CD4-positive, alpha-beta T cell (primary cell): ENCODE measurements at regions of chr12 and their contacts with region 1.

Region 1: DNA sequence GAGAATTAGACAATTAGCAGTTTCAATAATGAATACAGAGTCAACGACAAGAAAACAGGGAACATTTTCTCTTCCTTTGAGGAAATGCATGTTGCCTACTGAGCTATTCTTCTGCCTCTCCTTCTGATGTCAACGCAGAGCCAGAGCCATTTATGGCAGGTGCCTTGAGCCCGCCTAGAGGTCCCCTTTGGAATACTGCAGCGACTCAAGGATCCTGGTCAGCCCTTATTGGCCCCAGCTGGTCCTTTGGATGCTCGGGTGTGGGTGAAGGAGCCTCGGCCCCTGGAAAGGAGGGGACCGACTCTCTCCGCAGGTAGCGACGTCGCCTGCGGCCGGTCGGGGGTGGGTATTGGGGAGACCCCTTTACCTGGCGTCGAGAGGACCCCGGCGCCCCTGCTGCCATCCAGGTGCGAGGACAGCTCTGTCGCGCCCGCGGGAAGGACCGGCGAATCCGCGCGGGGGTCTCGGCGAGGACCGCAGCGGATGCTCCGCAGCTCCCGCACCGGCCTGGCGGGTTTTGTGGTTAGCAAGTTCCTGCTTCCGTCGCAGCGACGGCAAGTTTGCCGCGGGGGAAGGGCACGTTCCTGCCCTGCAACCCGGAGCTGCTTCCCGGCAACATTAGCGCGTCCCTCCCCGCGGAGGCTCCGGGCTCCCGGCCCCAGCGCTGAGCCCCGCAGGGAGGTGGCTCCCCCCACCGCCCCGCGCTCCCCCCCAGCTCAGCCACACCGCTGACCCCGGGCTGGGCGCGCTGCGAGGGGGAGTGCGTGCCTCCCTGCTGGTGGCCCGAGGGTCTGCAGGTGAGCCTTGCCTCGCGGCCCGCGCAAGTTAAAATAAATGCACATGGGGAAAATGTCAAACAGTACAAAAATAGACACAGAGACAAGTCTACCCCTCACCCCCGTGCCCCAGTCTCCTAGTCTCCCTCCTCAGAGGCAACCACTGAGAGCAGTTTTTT is at the start of gene MANSC1:
- DNase-seq: peak; percentile 14 to 79 (median 52)
- ATAC-seq: peak; percentile 71
- H3K4me3 ChIP-seq: peak within 1 kb of the TSS; percentile 54
- H3K4me3 Mint-ChIP-seq: peak within 1 kb of the TSS; percentile 72
- H3K27ac ChIP-seq: peak within 1 kb of the TSS; percentile 50 to 72
- H3K27ac Mint-ChIP-seq: peak within 1 kb of the TSS; percentile 79
- H3K4me1 ChIP-seq: peaks cover 24% of the 10 kb centered on the region
- H3K4me1 Mint-ChIP-seq: peaks cover 62% of the 10 kb centered on the region
- H3K27me3 ChIP-seq: no peaks in the 10 kb centered on the region
- H3K27me3 Mint-ChIP-seq: no peaks in the 10 kb centered on the region
- CTCF ChIP-seq: peak; percentile 48
- total RNA-seq, gene MANSC1: 0.33 to 0.45 TPM

Region 2: GRCh38 chr12:12266873-12267741 is 82.9 kb before region 1 on chr12 and contains the start of gene LRP6:
- CTCF ChIA-PET with region 1: no interaction called
- POLR2A ChIA-PET with region 1: interaction called, 4 read pairs
- intact Hi-C with region 1: loop called in 1 of 2 experiments (anchors 5 kb)
- DNase-seq: peak; percentile 52 to 86 (median 70)
- ATAC-seq: peak; percentile 93
- H3K4me3 ChIP-seq: peak within 1 kb of the TSS; percentile 66
- H3K4me3 Mint-ChIP-seq: peak within 1 kb of the TSS; percentile 91
- H3K27ac ChIP-seq: no peak within 1 kb of the TSS
- H3K27ac Mint-ChIP-seq: peak within 1 kb of the TSS; percentile 18
- H3K4me1 ChIP-seq: peaks cover 16% of the 10 kb centered on the region
- H3K4me1 Mint-ChIP-seq: peaks cover 28% of the 10 kb centered on the region
- H3K27me3 ChIP-seq: peaks cover 0 to 14% of the 10 kb centered on the region in 2 experiments
- H3K27me3 Mint-ChIP-seq: peaks cover 6% of the 10 kb centered on the region
- CTCF ChIP-seq: no peak
- total RNA-seq, gene LRP6: 5.2 to 6.8 TPM

Region 3: GRCh38 chr12:12315838-12316237 is 34.1 kb before region 1 on chr12:
- CTCF ChIA-PET with region 1: no interaction called
- POLR2A ChIA-PET with region 1: no interaction called
- intact Hi-C with region 1: no loop called
- DNase-seq: no peak
- ATAC-seq: no peak
- H3K4me3 ChIP-seq: no peak overlapping the region
- H3K4me3 Mint-ChIP-seq: no peak overlapping the region
- H3K27ac ChIP-seq: no peak overlapping the region
- H3K27ac Mint-ChIP-seq: no peak overlapping the region
- H3K4me1 ChIP-seq: no peaks in the 10 kb centered on the region
- H3K4me1 Mint-ChIP-seq: no peaks in the 10 kb centered on the region
- H3K27me3 ChIP-seq: no peaks in the 10 kb centered on the region
- H3K27me3 Mint-ChIP-seq: no peaks in the 10 kb centered on the region
- CTCF ChIP-seq: no peak

Region 4: DNA sequence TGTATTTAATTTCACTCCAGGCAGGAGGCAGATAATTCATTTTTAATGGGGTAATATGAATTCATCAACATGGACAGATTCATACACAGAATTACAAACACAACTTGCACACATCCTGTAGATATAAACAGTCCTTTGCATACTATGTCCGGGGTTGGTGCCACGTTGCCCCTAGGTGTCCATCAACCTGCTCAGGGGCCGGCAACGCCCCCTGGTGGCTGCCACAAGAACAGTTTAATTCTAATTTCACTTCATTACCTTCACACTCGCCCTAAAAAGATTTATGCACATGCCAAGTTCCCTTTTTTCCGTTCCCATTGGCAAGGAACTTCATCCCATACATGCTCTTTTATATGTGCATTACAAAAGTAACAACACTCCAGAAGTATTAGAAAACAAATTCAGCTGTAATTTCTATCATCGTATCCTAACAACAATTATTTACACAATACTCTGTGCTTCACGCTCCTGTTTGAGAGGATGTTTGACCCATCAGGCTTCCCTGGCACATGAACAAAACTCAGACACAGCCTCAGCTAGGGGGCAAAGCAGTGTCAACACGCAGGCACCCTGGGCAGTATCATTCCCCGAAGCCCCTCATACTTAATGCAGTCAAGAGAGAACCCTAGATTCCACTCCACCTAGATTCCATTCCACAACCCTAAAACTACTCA is 15.5 kb before region 1 on chr12:
- CTCF ChIA-PET with region 1: interaction called, 3 read pairs
- POLR2A ChIA-PET with region 1: interaction called, 5 read pairs
- intact Hi-C with region 1: loop called in 1 of 2 experiments (anchors 2 kb)
- DNase-seq: peak; percentile 32 to 83 (median 48)
- ATAC-seq: peak; percentile 71
- H3K4me3 ChIP-seq: no peak overlapping the region
- H3K4me3 Mint-ChIP-seq: no peak overlapping the region
- H3K27ac ChIP-seq: no peak overlapping the region
- H3K27ac Mint-ChIP-seq: no peak overlapping the region
- H3K4me1 ChIP-seq: peaks cover 15% of the 10 kb centered on the region
- H3K4me1 Mint-ChIP-seq: peaks cover 28% of the 10 kb centered on the region
- H3K27me3 ChIP-seq: no peaks in the 10 kb centered on the region
- H3K27me3 Mint-ChIP-seq: no peaks in the 10 kb centered on the region
- CTCF ChIP-seq: peak; percentile 96